ENCODE measurements at regions of chr16 and their contacts with region 1.

Region 1: DNA sequence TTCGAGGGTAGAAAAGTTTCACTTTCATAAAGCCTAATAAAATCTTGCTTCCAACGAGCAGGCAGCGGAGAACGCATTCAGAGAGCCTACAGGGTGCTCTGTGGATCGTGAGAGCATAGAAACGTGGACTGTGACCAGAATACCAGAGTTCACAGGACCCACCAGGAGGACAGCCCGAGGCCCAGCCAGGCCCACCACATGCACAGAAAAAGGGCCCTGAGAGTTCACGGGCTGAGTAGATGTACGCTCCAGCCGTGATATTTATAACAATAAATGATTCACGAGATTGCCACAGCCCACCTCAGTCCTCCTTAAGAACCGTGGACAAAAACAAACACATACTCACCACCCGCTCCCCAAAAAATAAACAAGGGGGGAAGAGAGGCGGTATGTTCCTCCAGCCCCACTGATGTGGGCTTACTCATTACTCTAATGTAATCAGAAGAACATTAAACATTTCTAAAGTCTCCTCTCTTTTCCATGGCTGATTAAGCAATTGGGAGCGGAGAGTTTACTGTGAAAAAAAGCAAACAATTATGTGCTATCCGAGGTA is 207.2 kb downstream of the C16orf78 start:
- DNase-seq: no peak
- H3K4me3 ChIP-seq: no peak overlapping the region
- H3K27ac ChIP-seq: no peak overlapping the region
- H3K27me3 ChIP-seq: peaks cover 19% of the 10 kb centered on the region
- CTCF ChIP-seq: no peak

Region 2: GRCh38 chr16:49592546-49593423 is 12.0 kb after region 1 on chr16:
- CTCF ChIA-PET with region 1: interaction called, 19 read pairs
- POLR2A ChIA-PET with region 1: no interaction called
- DNase-seq: no peak
- H3K4me3 ChIP-seq: no peak overlapping the region
- H3K27ac ChIP-seq: no peak overlapping the region
- H3K27me3 ChIP-seq: peaks cover 18% of the 10 kb centered on the region
- CTCF ChIP-seq: peak; percentile 77

Region 3: DNA sequence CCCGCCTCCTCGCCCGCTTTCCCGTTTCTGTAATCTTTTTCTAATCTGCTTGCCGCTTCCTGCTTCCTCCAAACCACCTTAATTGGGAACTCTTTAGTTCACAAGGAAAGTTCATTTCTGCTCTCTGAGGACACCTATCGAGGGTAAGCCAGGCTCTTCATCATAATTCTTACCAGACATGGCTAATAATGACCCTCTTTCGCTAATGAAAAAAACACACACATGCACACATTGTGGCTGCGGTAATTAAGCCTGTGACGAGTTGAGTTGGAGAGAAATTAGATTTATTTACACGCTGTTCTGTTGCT is 174.4 kb after region 1 on chr16:
- CTCF ChIA-PET with region 1: no interaction called
- POLR2A ChIA-PET with region 1: no interaction called
- DNase-seq: peak; percentile 3
- H3K4me3 ChIP-seq: no peak overlapping the region
- H3K27ac ChIP-seq: no peak overlapping the region
- H3K27me3 ChIP-seq: peaks cover 9% of the 10 kb centered on the region
- CTCF ChIP-seq: peak; percentile 49

Measured in AG04450 (cell line).